Testis (tissue), 5 donors: ENCODE measurements at regions of chr19 and their contacts with region 1.

Region 1: DNA sequence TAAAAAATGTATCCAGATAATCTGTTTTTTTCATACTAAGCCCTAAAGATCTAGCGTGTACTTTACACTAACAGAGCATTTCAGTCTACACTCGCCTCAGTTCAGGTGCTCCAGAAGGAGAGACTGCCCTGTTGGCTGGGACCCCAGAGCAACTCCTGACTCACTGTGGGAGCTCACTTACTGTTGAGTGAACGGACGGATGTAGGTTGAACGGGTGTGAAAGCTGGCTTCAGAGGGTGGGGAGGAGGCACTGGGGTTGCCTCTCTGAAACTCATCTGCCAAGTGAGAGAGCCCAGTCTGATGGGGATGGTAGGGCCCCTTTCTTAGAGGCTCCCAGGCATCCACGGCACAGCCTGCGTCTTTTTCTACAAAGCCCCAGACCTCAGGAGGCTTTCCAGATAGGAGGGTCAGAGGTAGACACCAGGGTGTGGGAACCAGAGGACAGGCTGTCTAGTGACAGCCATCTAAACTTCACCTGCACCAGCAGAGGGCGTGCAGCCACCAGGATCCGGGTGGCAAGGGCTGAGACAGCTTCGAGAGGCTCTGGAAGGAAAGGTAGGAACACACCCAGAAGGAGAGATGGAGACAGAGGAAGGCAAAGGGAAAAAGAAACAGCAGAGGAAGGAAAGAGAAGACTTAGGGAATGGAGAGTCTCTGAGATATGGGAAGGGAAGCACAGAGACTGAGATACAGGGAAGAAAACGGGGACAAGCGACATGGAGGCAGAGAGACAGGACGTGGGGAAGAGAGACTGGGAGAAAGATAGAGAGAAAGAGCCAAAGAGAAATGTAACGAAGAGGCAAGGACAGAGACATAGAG is 3.7 kb downstream of the KASH5 start:
- DNase-seq: peak; percentile 82
- H3K4me3 ChIP-seq: no peak overlapping the region
- H3K27ac ChIP-seq: no peak overlapping the region
- H3K4me1 ChIP-seq: no peaks in the 10 kb centered on the region
- H3K27me3 ChIP-seq: no peaks in the 10 kb centered on the region
- CTCF ChIP-seq: peak; percentile 52 to 73 (median 69)
- POLR2A ChIP-seq: no peak

Region 2: GRCh38 chr19:49443366-49444099 is 51.7 kb after region 1 on chr19:
- intact Hi-C with region 1: loop called (anchors 10 kb)
- DNase-seq: peak; percentile 98
- H3K4me3 ChIP-seq: peak overlapping the region; percentile 42 to 64
- H3K27ac ChIP-seq: peak overlapping the region; percentile 74 to 77
- H3K4me1 ChIP-seq: peaks cover 11% of the 10 kb centered on the region
- H3K27me3 ChIP-seq: no peaks in the 10 kb centered on the region
- CTCF ChIP-seq: peak; percentile 71 to 93 (median 80)
- POLR2A ChIP-seq: no peak

Region 3: GRCh38 chr19:49455773-49456172 is 64.0 kb after region 1 on chr19:
- intact Hi-C with region 1: no loop called
- DNase-seq: no peak
- H3K4me3 ChIP-seq: no peak overlapping the region
- H3K27ac ChIP-seq: peak overlapping the region; percentile 47 to 60
- H3K4me1 ChIP-seq: peaks cover 4% of the 10 kb centered on the region
- H3K27me3 ChIP-seq: no peaks in the 10 kb centered on the region
- CTCF ChIP-seq: no peak
- POLR2A ChIP-seq: no peak